ENCODE measurements at regions of chr18 and their contacts with region 1.

Region 1: GRCh38 chr18:35290073-35290735 is at the start of gene ZSCAN30:
- DNase-seq: peak; percentile 97
- ATAC-seq: peak; percentile 97
- H3K4me3 Mint-ChIP-seq: peak within 1 kb of the TSS; percentile 96
- H3K27ac Mint-ChIP-seq: peak within 1 kb of the TSS; percentile 96
- H3K4me1 Mint-ChIP-seq: peaks cover 45% of the 10 kb centered on the region
- H3K27me3 Mint-ChIP-seq: no peaks in the 10 kb centered on the region
- total RNA-seq, gene ZSCAN30: 24.2 to 25.4 TPM

Region 2: DNA sequence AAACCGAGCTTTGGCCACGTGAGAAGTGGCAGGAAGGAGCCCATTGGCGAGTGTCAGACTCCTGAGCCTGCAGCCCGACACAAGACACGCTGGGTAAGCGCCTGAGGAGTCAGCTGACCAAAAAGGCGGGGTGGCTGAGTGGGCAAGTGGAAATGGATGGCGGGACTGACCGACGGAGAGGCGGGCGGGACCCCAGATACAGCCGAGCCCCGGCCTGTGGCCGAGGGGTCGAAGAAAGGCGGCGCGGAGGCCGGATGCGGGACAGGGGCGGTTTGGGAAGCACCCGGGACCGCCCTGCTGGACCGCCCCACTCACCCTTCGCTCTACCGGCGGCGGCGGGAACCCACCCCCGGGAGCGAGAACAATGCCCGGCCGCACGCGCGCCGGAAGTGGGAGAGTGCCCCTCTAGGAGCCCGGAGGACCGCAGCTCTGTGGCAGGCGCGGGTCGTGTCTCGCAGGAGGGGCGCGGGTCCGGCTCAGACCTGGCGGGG is 23.0 kb before region 1 on chr18:
- CTCF ChIA-PET with region 1: interaction called, 9 read pairs
- POLR2A ChIA-PET with region 1: interaction called, 4 read pairs
- intact Hi-C with region 1: loop called (anchors 1 kb)
- DNase-seq: peak; percentile 76
- ATAC-seq: peak; percentile 82
- H3K4me3 Mint-ChIP-seq: peak overlapping the region; percentile 80
- H3K27ac Mint-ChIP-seq: peak overlapping the region; percentile 91
- H3K4me1 Mint-ChIP-seq: peaks cover 21% of the 10 kb centered on the region
- H3K27me3 Mint-ChIP-seq: no peaks in the 10 kb centered on the region

Measured in activated CD4-positive, alpha-beta T cell treated with anti-CD3 and anti-CD28 coated beads for 36 hours (primary cell).